ENCODE measurements at regions of chr17 and their contacts with region 1.

Region 1: DNA sequence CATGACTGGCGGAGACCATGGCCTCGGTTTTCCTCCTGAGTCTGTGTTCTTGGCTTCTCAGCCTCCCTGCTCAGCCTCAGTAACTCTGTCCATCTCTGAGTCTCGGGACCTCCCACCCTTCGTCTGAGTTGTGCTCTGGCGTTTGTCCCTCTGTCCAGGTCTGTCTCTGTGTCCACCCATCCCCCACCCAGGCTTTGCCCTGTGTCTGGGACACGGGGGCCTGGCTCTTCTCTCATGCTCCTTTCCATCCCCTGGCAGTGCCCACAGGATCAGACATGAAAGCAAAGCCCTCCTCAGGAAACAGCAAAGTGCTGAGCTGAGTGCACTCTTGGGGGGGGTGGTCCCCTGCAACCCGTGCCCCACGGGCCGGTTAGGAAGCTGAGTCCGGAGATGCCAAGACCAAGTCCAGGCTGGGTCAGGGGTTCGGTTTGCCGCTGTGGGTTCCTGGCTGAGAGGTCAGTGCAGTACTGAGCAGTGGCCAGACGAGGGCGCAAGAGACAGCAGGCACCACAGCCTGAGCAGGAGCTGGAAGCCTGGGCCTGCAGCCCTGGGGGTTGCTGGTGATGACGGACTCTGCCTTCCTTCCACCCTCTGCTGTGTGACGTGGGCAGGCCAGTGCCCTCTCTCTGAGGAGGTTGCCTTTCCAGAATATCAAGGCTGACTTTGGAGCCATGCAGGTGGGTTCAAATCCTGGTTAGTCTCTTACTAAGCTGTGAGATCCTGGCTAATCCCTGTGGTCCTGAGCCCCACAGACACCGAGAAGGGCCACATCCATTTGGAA is 2.5 kb downstream of the P2RX1 start:
- DNase-seq: peak; percentile 66 to 94
- H3K4me3 ChIP-seq: no peak overlapping the region
- CTCF ChIP-seq: peak in 2 of 3 donors; percentile 56 to 64
- POLR2A ChIP-seq: no peak

Region 2: GRCh38 chr17:4004517-4005295 is 91.0 kb after region 1 on chr17:
- intact Hi-C with region 1: loop called (anchors 5 kb)
- DNase-seq: peak in 1 of 2 donors; percentile 88
- H3K4me3 ChIP-seq: no peak overlapping the region
- CTCF ChIP-seq: peak in 2 of 3 donors; percentile 47 to 59
- POLR2A ChIP-seq: no peak